Kidney (tissue), 22 donors: ENCODE measurements at regions of chr17 and their contacts with region 1.

Region 1: DNA sequence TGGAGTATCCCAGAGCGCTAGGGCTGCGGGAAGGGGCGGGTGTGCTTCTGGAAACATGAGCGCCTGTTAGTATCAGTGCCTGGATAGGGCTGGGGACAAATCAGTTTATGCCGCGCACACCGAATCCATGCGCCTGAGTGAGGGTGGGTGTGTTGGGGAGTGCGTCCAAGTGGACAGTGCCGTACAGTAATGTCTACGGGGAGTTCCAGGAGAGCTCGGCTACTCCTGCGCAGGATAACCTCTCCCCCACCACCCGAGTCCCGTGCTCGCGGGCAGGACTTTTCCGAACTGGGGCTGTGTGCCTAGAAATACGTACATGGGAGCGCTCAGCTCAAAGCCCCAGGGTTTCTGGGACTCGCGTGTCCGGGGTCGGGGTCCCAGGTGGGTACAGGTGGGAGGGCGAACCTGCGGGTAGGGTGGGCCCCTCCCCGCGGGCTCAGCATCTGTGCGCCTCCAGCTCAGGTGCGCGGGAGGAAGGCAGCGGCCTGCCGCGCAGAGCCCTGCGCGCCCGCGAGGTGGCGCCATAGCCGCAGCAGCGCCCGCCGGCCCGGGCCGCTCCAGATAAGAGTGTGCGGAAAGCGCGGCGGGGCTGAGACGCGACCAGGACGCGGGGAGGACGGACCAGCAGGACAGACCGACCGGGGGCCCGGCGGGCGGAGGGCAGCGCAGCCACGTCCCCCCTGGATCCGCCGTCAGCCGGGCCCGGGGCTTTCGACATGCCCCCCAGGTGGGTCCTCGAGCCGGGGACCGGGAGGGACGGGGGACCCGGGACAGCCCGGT is at the start of gene HIC1:
- DNase-seq: peak; percentile 76 to 94 (median 86)
- H3K4me3 ChIP-seq: peak within 1 kb of the TSS in 2 of 3 donors; percentile 34 to 41
- H3K27ac ChIP-seq: peak within 1 kb of the TSS; percentile 83 to 85
- H3K4me1 ChIP-seq: peaks cover 0 to 13% (median 0%) of the 10 kb centered on the region in 3 donors
- H3K27me3 ChIP-seq: peaks cover 8% of the 10 kb centered on the region
- CTCF ChIP-seq: peak; percentile 90
- total RNA-seq, gene HIC1: 13.0 TPM

Region 2: DNA sequence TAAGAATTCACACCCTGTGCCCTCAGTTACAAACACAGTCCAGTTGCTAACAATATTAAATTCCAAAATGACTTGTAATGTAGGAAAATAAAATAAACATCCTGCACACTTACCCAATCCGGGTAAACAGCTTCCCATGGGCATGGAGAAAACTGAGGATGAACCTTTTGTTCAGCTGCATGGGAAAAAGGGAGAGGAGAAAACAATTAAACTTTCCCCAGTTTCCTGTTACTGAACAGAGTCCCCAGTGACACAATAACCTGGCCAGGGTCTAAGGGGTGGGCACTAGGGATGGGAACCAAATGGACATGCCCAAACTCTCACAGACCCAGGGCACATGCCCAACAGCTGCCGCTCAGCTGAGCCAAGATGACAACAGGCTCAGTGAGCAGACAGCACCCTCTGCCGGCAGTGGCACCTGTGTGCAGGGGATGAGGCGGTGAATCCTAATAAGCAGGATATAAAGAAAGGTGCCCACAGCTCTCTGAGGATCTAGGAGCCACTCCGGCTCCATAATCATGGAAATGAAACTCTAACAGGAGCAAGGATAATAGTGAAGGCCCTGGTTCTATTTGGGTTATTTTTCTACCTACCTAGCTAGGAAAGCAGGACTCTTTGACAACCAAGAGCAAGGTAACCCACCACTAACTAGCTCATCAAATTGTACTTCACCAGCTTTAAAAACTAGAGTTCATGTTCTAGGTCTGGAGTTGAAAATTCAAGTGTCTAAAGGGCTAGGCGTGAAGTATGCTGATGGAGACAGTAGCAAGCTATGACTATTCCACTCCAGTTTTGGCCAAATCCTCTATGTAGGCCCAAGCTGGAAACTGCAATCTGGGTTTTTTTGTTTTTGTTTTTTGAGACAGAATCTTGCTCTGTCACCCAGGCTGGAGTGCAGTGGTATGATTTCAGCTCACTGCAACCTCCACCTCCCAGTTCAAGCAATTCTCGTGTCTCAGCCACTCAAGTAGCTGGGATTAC is 190.1 kb after region 1 on chr17:
- intact Hi-C with region 1: loop called (anchors 5 kb)
- DNase-seq: peak; percentile 85 to 92 (median 86)
- H3K4me3 ChIP-seq: no peak overlapping the region
- H3K27ac ChIP-seq: no peak overlapping the region
- H3K4me1 ChIP-seq: no peaks in the 10 kb centered on the region
- H3K27me3 ChIP-seq: no peaks in the 10 kb centered on the region
- CTCF ChIP-seq: peak; percentile 96